Posterior cingulate gyrus (tissue), 11 donors: ENCODE measurements at regions of chr21 and their contacts with region 1.

Region 1: DNA sequence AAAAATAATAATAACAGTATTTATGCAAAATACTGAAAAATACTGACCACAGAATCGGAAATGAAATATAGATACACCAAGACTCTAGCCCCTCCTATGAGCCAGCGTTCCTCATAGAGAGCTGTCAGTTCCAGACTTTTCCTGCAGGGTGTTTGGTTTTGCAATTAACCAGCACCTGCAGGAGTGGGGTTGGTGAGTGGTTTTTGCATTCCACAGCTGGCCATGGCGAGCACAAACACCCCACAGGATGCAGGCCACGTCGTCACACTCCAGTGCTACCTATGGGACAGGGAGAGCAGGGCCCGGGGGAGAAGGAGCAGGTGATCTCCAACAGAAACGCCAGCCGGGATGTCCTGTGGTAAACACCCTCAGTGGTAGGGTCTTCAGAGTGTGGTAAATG is 94.1 kb downstream of the ERG start:
- DNase-seq: no peak

Region 2: GRCh38 chr21:38219049-38219628 is 185.0 kb before region 1 on chr21:
- intact Hi-C with region 1: no loop called
- DNase-seq: peak in 4 of 10 donors; percentile 27 to 43 (median 36)

Region 3: DNA sequence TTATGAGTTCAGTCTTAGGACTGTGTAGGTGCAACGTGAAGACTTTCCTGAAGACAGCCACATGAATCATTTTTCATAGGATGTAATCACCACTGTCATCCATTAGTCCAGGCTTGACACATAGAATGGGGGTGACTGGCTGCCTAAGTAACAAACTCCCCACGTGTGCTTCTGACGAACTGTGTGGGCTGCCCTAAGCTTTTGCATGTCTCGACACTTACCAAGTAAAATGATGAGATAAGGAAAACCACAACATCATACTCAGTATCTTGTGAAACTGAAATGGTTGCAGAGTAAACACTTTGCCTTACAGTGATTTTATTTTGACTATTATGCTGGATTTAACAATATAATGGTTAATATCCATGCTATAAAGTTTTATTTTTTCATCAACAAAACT is 74.6 kb after region 1 on chr21:
- intact Hi-C with region 1: loop called (anchors 10 kb)
- DNase-seq: no peak